ENCODE measurements at regions of chr7 and their contacts with region 1.

Region 1: GRCh38 chr7:121395961-121396757 is at the start of gene FAM3C:
- DNase-seq: peak; percentile 94
- ATAC-seq: peak; percentile 100
- total RNA-seq, gene FAM3C: 40.2 TPM

Region 2: GRCh38 chr7:120662291-120662690 is 733.9 kb before region 1 on chr7:
- intact Hi-C with region 1: no loop called
- DNase-seq: no peak
- ATAC-seq: no peak

Region 3: DNA sequence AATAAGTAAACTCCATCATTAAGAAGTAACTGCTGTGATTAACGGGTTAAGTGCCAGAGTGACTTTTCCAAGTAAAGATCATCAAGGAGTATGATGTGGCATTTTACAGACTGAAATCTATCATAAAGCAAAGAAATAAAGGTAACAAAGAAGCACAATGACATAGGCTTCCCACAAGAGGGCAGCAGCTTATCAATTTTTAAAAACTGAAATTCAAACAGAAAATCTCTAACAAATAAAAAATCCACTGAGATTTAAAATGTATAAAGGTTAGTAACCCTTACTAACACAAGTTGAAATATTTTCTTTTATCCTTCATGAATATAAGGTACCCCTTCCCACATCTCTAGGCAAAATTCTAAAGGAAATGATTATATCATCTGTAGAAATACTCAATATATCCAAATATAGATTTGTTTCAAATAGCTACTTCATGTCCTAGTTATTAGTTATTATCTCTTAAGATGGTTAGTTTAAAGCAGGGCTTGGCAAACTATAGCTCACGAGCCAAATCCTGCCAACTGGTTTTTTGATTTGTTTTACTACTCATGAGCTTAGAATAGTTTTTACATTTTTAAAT is 29.2 kb before region 1 on chr7:
- intact Hi-C with region 1: loop called (anchors 2 kb)
- DNase-seq: no peak
- ATAC-seq: no peak

Region 4: DNA sequence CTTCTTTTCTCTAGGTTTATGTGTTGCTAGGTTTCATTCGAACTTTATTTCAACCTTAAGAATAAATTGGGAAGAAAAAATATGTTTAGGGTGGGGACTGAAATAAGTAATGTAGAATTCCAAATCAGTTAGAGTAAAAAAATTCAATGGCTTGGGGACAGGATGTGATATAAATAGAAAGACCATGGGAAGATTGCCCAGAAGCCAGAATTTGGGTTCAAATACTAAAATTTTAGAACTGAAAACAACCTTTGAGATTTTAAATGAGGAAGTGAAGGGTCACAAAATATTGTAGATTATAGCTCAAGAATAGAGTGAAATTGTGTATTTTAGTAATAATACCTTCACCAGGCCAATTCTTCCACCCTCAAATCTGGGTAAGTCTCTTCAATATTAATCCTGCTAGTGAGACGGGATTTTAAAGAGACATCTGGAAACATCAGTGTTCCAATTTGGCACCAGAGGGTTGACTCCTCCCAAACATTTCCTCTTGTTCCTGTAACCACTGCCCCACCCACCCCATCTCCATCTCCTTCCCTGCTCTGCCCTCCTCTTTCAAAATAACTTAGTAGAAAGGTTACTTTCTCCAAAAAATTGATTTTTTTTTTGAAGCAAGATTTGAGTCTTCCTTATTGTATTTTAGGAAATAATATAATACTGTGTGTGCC is 51.2 kb after region 1 on chr7:
- intact Hi-C with region 1: loop called (anchors 2 kb)
- DNase-seq: peak; percentile 75
- ATAC-seq: peak; percentile 88

Region 5: GRCh38 chr7:121961089-121961867 is 565.1 kb after region 1 on chr7:
- intact Hi-C with region 1: no loop called
- DNase-seq: no peak
- ATAC-seq: no peak

Measured in Right ventricle myocardium inferior (tissue), 1 donor.